IMR-90 (cell line): ENCODE measurements at regions of chr17 and their contacts with region 1.

Region 1: DNA sequence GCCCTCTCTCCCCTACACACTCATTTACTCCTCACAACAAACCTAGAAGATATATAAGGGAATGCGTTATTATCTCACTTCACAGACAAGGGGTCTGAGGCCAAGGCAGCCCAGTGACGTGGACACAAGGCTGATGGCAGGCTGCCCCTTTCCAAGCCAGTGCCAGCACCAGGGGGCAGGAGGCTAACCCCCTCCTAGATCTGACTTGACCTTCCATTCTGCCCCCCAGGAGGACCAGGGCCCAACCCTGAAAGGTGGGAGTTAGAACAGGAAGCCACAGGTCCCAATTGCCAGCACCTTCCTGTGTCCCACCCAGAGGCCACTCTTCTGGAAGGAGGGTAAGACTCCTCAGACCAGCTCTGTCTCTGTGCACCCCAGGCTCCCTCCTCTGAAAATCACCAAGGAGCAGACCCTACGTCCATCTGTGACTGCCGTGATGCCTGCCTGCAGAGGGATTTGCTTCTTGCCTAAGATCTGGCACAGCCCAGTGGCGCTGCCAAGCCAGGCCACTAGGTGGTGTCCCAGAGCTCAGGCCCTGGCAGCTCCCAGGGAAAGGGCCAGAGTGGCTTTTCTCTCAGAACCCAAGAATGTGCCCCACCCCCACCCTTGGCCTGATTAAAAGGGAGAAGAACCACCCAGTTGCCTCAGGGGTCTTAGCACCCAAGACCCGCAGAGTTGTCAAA is 42.4 kb upstream of the MRPS23 start:
- DNase-seq: peak; percentile 84
- ATAC-seq: peak; percentile 74
- H3K4me3 ChIP-seq: no peak overlapping the region
- H3K27ac ChIP-seq: peak overlapping the region; percentile 67
- H3K4me1 ChIP-seq: peaks cover 44% of the 10 kb centered on the region
- H3K27me3 ChIP-seq: no peaks in the 10 kb centered on the region
- CTCF ChIP-seq: peak; percentile 97
- POLR2A ChIP-seq: no peak
- RAD21 ChIP-seq: peak; percentile 88

Region 2: DNA sequence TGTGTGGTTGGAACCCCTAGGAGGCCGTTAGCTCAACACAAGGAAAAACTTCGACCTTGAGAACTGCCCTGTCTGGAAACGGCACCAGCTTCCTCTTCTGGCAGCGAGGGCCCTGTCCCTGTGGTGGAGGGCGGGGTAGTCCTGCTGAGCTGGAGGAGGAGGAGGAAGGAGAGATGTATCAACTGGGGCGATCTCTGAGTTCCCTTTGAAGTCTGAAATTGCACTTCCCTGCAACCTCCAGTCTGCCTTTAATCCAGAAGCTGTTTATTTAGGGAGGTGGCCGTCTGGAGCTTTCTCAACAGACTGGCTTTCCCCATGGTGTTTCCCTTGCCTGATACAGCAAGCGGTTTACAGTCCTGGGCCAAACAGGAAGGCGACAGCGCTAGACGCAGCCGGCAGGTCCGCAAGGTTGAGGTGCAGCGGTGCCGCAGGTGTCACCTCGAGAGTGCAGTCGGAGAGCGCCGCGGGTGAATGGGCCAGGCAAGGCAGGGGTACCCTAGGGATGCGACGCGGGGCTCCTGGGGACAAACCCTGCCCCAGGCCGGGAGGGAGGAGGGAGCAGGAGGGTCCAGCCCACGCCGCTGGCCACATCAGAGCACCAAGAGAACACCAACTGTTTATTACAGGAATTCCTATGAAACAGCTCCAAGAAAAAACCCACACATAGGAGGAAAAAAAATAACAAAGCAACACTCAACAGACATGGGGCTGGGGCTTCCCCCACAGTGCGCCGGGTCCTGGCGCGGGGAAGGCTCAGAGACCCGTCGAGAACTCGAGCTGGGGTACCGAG is 31.1 kb before region 1 on chr17:
- CTCF ChIA-PET with region 1: interaction called, 6 read pairs
- POLR2A ChIA-PET with region 1: no interaction called
- dilution Hi-C with region 1: no loop called
- in situ Hi-C with region 1: no loop called
- intact Hi-C with region 1: loop called (anchors 1 kb)
- DNase-seq: peak; percentile 60
- ATAC-seq: peak; percentile 67
- H3K4me3 ChIP-seq: peak overlapping the region; percentile 28; the same call in 1 of the 2 replicates
- H3K27ac ChIP-seq: peak overlapping the region; percentile 75
- H3K4me1 ChIP-seq: peaks cover 18% of the 10 kb centered on the region
- H3K27me3 ChIP-seq: no peaks in the 10 kb centered on the region
- CTCF ChIP-seq: no peak
- POLR2A ChIP-seq: no peak
- RAD21 ChIP-seq: peak; percentile 2; the same call in 1 of the 2 replicates

Region 3: GRCh38 chr17:57875309-57876115 is 16.8 kb before region 1 on chr17:
- CTCF ChIA-PET with region 1: interaction called, 7 read pairs
- POLR2A ChIA-PET with region 1: interaction called, 4 read pairs
- dilution Hi-C with region 1: no loop called
- in situ Hi-C with region 1: no loop called
- intact Hi-C with region 1: loop called (anchors 1 kb)
- DNase-seq: peak; percentile 99
- ATAC-seq: peak; percentile 75
- H3K4me3 ChIP-seq: no peak overlapping the region
- H3K27ac ChIP-seq: peak overlapping the region; percentile 89
- H3K4me1 ChIP-seq: peaks cover 51% of the 10 kb centered on the region
- H3K27me3 ChIP-seq: no peaks in the 10 kb centered on the region
- CTCF ChIP-seq: peak; percentile 82
- POLR2A ChIP-seq: peak; percentile 55
- RAD21 ChIP-seq: peak; percentile 77

Region 4: GRCh38 chr17:57881093-57881531 is 11.2 kb before region 1 on chr17:
- CTCF ChIA-PET with region 1: interaction called, 8 read pairs
- POLR2A ChIA-PET with region 1: interaction called, 3 read pairs
- dilution Hi-C with region 1: no loop called
- in situ Hi-C with region 1: no loop called
- intact Hi-C with region 1: loop called (anchors 1 kb)
- DNase-seq: peak; percentile 89
- ATAC-seq: peak; percentile 69
- H3K4me3 ChIP-seq: no peak overlapping the region
- H3K27ac ChIP-seq: peak overlapping the region; percentile 94
- H3K4me1 ChIP-seq: peaks cover 46% of the 10 kb centered on the region
- H3K27me3 ChIP-seq: no peaks in the 10 kb centered on the region
- CTCF ChIP-seq: no peak
- POLR2A ChIP-seq: no peak; the same call in 1 of the 2 replicates
- RAD21 ChIP-seq: no peak

Region 5: DNA sequence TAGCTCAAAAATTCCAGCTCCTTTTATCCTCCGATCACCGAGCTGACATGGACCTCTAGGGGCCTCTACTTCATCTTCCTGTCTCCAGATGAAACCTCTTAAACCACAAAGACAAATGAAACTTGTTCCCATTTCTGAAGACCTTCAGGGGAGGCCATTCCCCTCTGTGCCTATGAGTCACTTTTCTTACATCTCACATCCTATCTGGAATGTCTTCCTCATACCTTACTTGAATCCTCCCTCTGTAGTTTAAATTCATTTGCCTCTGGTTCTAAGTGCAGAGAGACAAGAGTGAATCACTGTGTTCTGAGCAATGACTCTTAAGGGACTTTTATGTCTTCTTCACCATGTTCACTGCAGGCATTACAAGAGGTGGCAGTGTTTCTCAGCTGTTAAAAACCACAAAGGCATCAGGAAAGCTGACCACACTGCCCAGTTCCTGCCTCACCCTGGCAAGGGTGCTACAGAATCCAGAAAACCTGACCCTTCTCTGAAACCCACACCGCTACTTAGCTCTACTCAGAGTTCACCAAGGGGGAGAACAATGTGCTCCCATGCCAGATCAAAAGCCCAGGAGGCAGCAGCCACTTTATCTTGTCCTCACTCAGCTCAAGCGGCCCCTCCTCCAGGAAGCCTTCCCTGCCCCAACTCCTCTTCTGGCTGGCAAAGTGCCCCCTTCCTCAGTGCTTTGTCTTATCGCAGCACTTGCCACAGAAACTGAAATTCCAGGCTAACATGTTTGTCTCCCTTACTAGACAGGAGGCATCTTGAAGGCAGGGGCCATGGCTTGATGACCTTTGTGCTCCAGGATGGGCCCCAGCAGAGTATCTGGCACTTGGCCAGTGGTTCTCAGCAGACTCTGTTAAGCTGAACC is 56.5 kb after region 1 on chr17:
- CTCF ChIA-PET with region 1: interaction called, 5 read pairs
- POLR2A ChIA-PET with region 1: no interaction called
- dilution Hi-C with region 1: no loop called
- in situ Hi-C with region 1: no loop called
- intact Hi-C with region 1: loop called (anchors 2 kb)
- DNase-seq: peak; percentile 96
- ATAC-seq: peak; percentile 79
- H3K4me3 ChIP-seq: no peak overlapping the region; the same call in 1 of the 2 replicates
- H3K27ac ChIP-seq: peak overlapping the region; percentile 90
- H3K4me1 ChIP-seq: peaks cover 33% of the 10 kb centered on the region
- H3K27me3 ChIP-seq: no peaks in the 10 kb centered on the region
- CTCF ChIP-seq: no peak; the same call in 1 of the 2 replicates
- POLR2A ChIP-seq: peak; percentile 32; the same call in 1 of the 2 replicates
- RAD21 ChIP-seq: peak; percentile 15; the same call in 1 of the 2 replicates

Region 6: DNA sequence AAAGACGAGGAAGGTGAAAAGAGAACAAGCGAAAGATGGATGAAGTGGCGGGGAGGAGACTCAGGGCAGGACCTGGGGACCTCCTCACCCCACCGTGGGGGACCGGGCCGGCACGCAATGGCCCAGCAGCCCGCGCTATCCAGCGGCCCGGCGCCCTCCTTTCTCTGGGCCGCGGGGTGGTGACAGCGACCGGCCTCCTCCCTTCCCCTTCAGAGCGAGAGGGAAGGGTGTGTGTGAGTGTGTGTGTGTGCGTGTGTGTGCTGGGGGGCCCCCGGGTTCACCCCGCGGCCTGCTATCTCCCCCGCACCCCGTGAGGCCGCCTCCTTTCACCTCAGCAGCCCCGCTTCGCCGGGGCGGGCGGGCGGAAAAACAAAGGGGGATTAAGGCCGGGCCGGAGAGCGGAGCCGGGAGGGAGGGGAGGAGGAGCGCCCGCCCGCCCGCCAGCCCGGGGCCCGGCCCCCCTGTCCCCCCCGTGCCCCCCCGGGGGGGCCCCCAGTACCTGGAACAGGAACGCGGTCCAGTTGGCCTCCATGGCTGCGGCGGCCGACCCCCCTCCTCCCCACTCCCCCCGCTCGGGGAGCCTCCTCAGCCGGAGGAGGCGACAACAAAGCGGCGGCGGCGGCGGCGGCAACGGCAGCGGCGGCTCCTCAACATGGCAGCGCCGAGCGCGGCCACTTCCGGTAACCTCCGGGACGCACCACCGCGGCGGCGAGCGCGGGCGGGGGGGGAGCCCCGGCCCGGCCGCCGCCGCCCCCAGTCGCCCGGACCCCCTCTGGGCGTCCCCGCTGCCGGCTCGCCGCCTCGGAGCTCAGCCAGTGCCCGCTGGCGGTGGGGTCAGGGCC is 95.5 kb after region 1 on chr17 and contains the start of gene VEZF1:
- CTCF ChIA-PET with region 1: no interaction called
- POLR2A ChIA-PET with region 1: no interaction called
- dilution Hi-C with region 1: no loop called
- in situ Hi-C with region 1: no loop called
- intact Hi-C with region 1: loop called (anchors 1 kb)
- DNase-seq: peak; percentile 44
- ATAC-seq: peak; percentile 60
- H3K4me3 ChIP-seq: peak within 1 kb of the TSS; percentile 99
- H3K27ac ChIP-seq: peak within 1 kb of the TSS; percentile 90
- H3K4me1 ChIP-seq: peaks cover 23% of the 10 kb centered on the region
- H3K27me3 ChIP-seq: no peaks in the 10 kb centered on the region
- CTCF ChIP-seq: no peak
- POLR2A ChIP-seq: no peak; the same call in none of the 2 replicates
- RAD21 ChIP-seq: no peak
- total RNA-seq, gene VEZF1: 40.3 and 42.1 TPM in 2 replicates

Region 7: DNA sequence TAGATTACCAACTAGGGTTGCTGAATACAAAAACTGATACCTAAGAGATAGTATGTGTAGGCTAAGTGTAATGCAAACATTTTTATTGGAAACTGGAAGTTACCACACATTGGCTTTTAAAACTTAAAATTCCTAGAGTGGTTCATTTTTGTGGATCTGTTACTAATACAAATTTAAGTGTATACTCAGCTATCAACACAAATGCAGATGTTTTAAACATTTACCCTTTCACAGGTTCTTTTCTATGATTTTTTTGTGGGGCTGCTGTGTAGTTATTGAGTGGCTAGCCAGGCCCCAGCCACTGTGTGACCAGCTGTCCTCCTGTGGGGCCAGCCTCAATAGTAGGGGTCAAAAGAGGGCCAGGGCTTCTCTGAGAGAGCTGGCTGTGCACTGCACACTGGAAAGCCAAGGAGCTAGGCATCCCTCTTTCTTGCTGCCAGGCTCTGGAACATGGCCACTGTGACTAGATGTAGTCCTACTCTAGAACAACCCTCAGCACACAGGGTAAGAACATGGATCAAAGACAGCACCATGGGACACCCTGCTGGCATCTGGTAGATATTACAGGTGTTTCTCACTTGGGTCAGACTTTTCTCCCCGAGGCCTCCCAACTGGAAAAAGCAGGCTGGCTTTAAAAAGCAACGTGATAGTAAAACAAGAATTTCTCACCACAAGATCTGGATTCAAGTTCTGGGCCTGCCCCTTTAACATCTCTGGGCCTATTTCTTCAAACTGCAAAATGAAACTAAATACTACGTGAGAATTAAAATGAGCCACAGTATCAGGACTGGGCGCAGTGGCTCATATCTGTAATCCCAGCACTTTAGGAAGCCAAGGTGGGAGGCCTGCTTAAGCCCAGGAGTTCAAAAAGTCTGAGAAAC is 103.0 kb after region 1 on chr17:
- CTCF ChIA-PET with region 1: interaction called, 4 read pairs
- POLR2A ChIA-PET with region 1: no interaction called
- dilution Hi-C with region 1: no loop called
- in situ Hi-C with region 1: no loop called
- intact Hi-C with region 1: loop called (anchors 2 kb)
- DNase-seq: peak; percentile 81
- ATAC-seq: peak; percentile 91
- H3K4me3 ChIP-seq: no peak overlapping the region
- H3K27ac ChIP-seq: no peak overlapping the region
- H3K4me1 ChIP-seq: peaks cover 2% of the 10 kb centered on the region; the same call in 1 of the 2 replicates
- H3K27me3 ChIP-seq: no peaks in the 10 kb centered on the region
- CTCF ChIP-seq: peak; percentile 73
- POLR2A ChIP-seq: no peak
- RAD21 ChIP-seq: peak; percentile 90